Transverse colon (tissue), 4 donors: ENCODE measurements at regions of chr5 and their contacts with region 1.

Region 1: GRCh38 chr5:7878381-7878873 is 9.5 kb downstream of the MTRR start:
- DNase-seq: no peak
- H3K4me3 ChIP-seq: no peak overlapping the region
- H3K27ac ChIP-seq: peak overlapping the region in 3 of 4 donors; percentile 18 to 38 (median 24)
- H3K4me1 ChIP-seq: peaks cover 3 to 21% (median 14%) of the 10 kb centered on the region in 4 donors
- H3K27me3 ChIP-seq: no peaks in the 10 kb centered on the region
- CTCF ChIP-seq: no peak
- EP300 ChIP-seq: no peak
- POLR2A ChIP-seq: no peak

Region 2: DNA sequence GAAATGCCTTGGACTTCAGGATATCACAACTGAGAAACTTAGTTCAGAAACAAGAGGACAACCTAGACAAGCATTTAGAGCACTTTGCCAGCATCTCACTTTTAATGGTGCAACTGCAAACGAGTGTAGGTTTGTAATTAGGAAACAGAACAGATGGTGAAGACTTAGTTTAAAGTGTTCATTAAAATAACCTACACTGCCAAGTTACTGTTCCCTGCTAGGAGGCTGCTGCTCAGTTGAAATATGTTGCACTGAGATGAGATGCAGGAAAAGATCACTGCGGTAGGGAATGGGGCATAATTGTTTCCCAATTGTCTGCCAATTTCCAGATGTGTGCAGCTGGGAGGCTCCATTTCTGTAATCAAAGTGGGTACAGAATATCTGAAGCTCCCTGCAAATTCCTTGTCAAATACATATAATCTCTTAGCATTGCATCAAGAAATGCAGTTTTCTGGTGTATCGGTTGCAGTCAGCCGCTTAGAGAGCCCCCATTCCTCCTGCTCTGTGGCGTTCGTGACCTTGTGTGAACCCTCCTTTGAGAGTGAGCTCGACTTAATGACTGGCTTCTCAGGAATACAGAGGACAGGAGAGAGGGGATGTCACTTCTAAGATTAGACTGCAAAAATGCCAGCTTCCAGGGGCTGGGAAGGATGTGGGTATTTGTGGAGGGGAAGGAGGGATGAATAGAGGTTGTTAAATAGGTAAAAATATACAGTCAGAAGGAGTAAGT is 1949.0 kb before region 1 on chr5:
- in situ Hi-C with region 1: no loop called
- intact Hi-C with region 1: loop called (anchors 5 kb)
- DNase-seq: no peak
- H3K4me3 ChIP-seq: no peak overlapping the region
- H3K27ac ChIP-seq: no peak overlapping the region
- H3K4me1 ChIP-seq: no peaks in the 10 kb centered on the region
- H3K27me3 ChIP-seq: no peaks in the 10 kb centered on the region
- CTCF ChIP-seq: no peak
- EP300 ChIP-seq: no peak
- POLR2A ChIP-seq: no peak

Region 3: GRCh38 chr5:7848296-7848695 is 30.1 kb before region 1 on chr5:
- in situ Hi-C with region 1: no loop called
- intact Hi-C with region 1: no loop called
- DNase-seq: no peak
- H3K4me3 ChIP-seq: no peak overlapping the region
- H3K27ac ChIP-seq: no peak overlapping the region
- H3K4me1 ChIP-seq: peaks cover 6 to 18% (median 9%) of the 10 kb centered on the region in 4 donors
- H3K27me3 ChIP-seq: peaks cover 40% of the 10 kb centered on the region
- CTCF ChIP-seq: no peak
- EP300 ChIP-seq: no peak
- POLR2A ChIP-seq: no peak